SK-N-SH (cell line): ENCODE measurements at regions of chr18 and their contacts with region 1.

Region 1: DNA sequence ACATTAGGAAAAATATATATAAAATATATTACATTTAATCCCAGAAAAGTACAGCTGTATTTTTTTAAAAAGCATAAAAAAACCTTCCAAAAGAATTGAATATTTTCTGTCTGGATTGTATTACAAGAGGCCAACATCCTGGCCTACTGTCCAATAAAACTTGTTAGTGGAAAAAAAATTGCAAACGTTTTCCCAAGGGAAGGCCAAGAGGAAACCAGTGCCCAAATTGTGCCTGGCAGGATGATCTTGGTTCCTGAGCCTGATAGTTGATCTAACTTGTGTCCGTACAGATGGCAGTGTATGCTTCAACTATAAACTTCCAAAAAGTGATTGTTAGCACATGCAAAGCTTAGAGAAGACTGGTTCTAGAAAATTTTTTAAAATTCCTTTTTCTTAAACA is 90.6 kb upstream of the LPIN2 start:
- DNase-seq: no peak
- H3K4me3 ChIP-seq: no peak overlapping the region
- H3K27ac ChIP-seq: no peak overlapping the region
- H3K4me1 ChIP-seq: peaks cover 3 to 12% of the 10 kb centered on the region in 2 experiments; a peak in 3 of 4 replicates
- H3K27me3 ChIP-seq: no peaks in the 10 kb centered on the region
- CTCF ChIP-seq: no peak
- EP300 ChIP-seq: no peak
- RAD21 ChIP-seq: no peak

Region 2: DNA sequence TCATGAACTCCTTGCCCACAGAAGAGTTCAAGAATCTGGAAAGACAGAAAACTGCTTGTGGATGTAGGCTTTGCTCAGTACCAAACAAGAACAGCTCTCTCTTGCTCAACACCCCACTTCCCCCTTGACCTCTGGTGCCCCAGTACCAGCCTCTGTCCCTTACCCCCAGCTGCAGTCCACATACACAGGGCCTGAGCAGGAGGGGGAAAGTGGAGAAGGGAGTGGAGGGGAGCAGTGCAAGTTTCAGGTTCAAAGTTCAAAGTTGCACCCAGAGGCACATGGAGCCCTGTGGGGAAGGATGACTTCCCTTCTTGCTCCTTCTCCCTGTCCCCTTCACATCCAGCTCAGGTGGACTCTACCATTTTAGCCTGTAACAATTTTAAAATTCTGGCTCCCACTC is 29.5 kb before region 1 on chr18:
- CTCF ChIA-PET with region 1: no interaction called
- POLR2A ChIA-PET with region 1: no interaction called
- DNase-seq: no peak
- H3K4me3 ChIP-seq: no peak overlapping the region
- H3K27ac ChIP-seq: no peak overlapping the region
- H3K4me1 ChIP-seq: no peaks in the 10 kb centered on the region; a peak in 1 of 4 replicates
- H3K27me3 ChIP-seq: no peaks in the 10 kb centered on the region
- CTCF ChIP-seq: no peak
- EP300 ChIP-seq: no peak
- RAD21 ChIP-seq: no peak

Region 3: GRCh38 chr18:3088449-3088848 is 15.1 kb before region 1 on chr18:
- CTCF ChIA-PET with region 1: interaction called, 14 read pairs
- POLR2A ChIA-PET with region 1: no interaction called
- DNase-seq: no peak
- H3K4me3 ChIP-seq: no peak overlapping the region
- H3K27ac ChIP-seq: no peak overlapping the region
- H3K4me1 ChIP-seq: peaks cover 0 to 8% of the 10 kb centered on the region in 2 experiments
- H3K27me3 ChIP-seq: no peaks in the 10 kb centered on the region
- CTCF ChIP-seq: no peak
- EP300 ChIP-seq: no peak
- RAD21 ChIP-seq: no peak

Region 4: DNA sequence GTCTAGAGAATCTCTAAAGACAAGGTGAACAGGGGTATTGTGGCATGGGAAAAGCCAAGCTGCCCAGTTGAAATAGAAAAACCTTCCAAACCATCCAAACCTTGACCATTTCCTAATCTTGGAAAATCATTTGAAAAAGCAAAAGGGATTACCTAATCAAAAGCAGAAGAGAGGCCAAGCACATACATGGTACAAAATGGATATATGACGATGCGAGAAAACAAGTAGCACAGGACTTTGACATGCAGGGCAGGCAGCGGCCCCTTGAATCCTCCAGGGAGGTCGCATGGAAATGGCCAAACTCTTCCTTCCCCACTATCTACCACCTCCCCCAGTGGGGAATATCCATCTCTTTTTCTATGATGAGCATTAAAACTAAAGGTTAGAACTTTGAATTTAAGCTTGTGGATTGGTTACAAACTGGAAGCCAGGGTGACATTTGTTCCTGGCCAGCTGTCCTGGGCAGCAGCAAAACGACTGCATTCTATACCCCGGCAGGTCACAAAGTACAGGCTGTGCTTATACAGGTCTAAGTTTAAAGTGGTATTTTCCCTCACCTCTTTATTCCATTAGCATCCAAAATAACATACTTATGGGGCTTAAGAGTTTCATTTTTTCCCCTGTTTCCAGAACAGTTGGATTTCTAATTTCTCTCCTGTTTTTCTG is 91.5 kb after region 1 on chr18:
- CTCF ChIA-PET with region 1: no interaction called
- POLR2A ChIA-PET with region 1: no interaction called
- DNase-seq: no peak
- H3K4me3 ChIP-seq: no peak overlapping the region
- H3K27ac ChIP-seq: no peak overlapping the region
- H3K4me1 ChIP-seq: no peaks in the 10 kb centered on the region; a peak in 1 of 4 replicates
- H3K27me3 ChIP-seq: no peaks in the 10 kb centered on the region
- CTCF ChIP-seq: no peak
- EP300 ChIP-seq: no peak
- RAD21 ChIP-seq: no peak

Region 5: GRCh38 chr18:3261371-3262246 is 158.0 kb after region 1 on chr18 and contains the start of gene MYL12B:
- CTCF ChIA-PET with region 1: no interaction called
- POLR2A ChIA-PET with region 1: no interaction called
- DNase-seq: peak; percentile 89
- H3K4me3 ChIP-seq: peak within 1 kb of the TSS; percentile 81 to 96
- H3K27ac ChIP-seq: peak within 1 kb of the TSS; percentile 87 to 95
- H3K4me1 ChIP-seq: peaks cover 14 to 17% of the 10 kb centered on the region in 2 experiments; a peak in 3 of 4 replicates
- H3K27me3 ChIP-seq: no peaks in the 10 kb centered on the region
- CTCF ChIP-seq: no peak; the same call in none of the 2 replicates
- EP300 ChIP-seq: peak in 1 of 2 experiments; percentile 59; a peak in 1 of 4 replicates
- RAD21 ChIP-seq: no peak
- polyA plus RNA-seq, gene MYL12B: 555 and 645 TPM in 2 replicates